Stomach (tissue), 19 donors: ENCODE measurements at regions of chr9 and their contacts with region 1.

Region 1: DNA sequence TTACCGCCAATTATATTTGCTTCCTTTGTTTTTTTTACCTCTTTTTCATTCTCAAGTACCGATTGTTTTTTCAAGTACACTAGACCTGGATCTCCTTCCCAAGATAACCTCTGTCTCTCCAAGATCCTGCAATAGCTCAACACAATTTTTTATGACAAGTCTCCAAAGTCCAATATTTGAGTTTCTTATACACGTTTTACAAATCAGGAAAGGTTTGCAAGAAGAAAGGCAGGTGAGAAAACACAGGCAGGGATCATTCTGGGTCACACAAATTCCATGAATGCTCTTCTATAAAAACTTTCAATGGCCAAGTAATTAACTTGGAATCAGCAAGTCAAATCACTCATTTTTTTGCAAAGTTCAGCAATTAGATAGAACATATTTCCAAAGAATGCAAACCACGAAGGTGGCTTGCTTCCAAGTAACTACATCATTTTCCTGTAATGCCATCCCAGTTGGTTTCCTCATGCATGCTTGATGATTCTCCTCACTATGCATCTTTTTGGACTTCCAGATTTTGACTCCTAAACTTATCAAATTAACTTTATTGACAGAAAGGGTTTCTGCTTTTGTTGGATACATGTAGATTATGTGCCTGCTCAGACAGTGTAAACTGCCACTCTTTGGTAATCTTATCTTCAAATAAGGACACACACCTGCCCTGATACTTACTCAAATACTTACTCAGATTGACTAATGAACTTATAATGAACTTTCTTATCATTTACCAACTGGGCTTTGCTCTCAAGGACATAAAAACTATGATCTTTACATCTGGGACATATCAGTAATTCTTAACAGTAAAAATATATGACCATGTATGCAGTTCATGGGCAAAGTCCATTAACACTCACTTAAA is 24.7 kb upstream of the IFNE start:
- DNase-seq: no peak
- H3K4me3 ChIP-seq: no peak overlapping the region
- H3K27ac ChIP-seq: no peak overlapping the region
- H3K4me1 ChIP-seq: peaks cover 0 to 28% (median 5%) of the 10 kb centered on the region in 4 donors
- H3K27me3 ChIP-seq: no peaks in the 10 kb centered on the region
- CTCF ChIP-seq: no peak
- EP300 ChIP-seq: no peak
- POLR2A ChIP-seq: no peak

Region 2: GRCh38 chr9:21267485-21268346 is 239.1 kb before region 1 on chr9:
- intact Hi-C with region 1: no loop called
- DNase-seq: no peak
- H3K4me3 ChIP-seq: no peak overlapping the region
- H3K27ac ChIP-seq: no peak overlapping the region
- H3K4me1 ChIP-seq: no peaks in the 10 kb centered on the region
- H3K27me3 ChIP-seq: peaks cover 0 to 13% (median 0%) of the 10 kb centered on the region in 3 donors
- CTCF ChIP-seq: no peak
- EP300 ChIP-seq: no peak
- POLR2A ChIP-seq: no peak

Region 3: DNA sequence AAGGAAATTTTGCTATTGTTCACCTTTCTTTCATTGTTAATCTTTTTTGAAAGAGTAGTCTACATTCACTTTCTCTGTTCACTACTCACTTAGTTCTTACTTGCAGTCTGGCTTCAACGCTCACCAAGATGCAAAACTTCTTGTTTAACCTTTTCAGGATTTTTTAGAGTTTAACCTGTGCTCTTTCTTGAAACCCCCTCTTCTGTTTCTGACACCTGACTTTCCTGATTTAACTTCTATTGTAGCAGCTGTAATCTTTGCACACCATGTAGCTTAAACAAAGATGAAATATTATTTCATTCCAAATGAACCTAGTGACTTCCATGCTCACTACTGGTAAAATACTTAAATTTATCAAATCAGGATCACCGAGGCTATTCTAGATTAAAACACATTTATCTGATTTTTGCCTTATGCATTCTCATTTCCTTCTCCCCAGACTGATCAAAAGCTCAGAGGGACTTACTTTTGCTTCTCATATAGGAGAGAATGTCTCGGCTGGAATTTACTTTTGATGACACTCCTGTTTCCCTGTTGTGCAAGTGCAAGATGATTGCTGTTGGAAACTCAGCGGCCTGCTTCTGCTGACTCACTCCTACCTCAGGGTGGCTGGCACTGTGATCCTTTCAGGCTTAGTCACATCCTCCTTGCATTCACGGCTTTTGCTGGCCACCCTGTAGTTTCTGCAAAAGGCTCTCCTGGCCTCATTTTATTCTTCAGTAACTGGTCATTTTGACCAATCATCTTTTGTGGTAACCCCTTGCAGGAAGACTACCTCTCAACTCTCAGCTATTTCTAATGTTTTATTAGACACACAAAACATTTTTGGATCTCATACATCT is 84.6 kb after region 1 on chr9:
- intact Hi-C with region 1: loop called (anchors 10 kb)
- DNase-seq: peak; percentile 52 to 62
- H3K4me3 ChIP-seq: no peak overlapping the region
- H3K27ac ChIP-seq: no peak overlapping the region
- H3K4me1 ChIP-seq: peaks cover 0 to 9% (median 0%) of the 10 kb centered on the region in 4 donors
- H3K27me3 ChIP-seq: no peaks in the 10 kb centered on the region
- CTCF ChIP-seq: no peak
- EP300 ChIP-seq: no peak
- POLR2A ChIP-seq: no peak